ENCODE measurements at regions of chr3 and their contacts with region 1.

Region 1: DNA sequence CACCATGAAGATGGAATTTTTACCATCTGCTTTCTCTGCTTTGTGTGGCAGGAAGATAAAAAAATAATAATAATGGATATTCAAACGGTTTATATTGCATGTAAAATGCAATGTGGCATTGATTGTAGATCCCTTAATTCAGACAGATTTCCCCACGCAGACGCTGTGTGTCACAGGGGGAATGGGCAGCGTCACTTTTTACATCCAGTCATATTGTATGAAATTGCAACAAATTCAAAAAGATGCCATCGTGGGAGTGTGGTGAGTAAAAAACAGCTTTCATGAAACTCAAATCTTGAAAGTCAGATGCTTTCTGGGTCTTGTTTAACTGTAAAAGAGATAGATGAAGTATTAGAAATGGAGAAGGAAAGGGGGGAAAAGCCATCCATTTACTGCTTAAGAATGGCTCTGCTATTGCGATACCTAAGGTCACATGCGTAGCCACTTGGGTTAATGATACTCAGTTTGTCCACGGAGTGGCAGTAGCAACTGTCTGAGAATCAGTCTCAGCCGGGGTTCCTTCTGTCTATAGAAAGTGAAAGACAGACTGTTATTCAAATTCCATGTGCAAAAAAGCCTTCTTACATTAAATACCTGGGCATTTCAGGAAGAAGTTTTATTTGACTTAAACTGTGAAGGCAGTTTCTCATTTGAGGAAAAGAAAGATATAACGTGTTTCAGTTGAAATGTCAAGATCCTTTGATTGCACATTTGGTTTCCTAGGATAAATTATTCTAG is 28.5 kb downstream of the BTD start:
- DNase-seq: peak; percentile 69
- H3K4me3 Mint-ChIP-seq: peak overlapping the region; percentile 48
- H3K27ac Mint-ChIP-seq: peak overlapping the region; percentile 62
- H3K4me1 Mint-ChIP-seq: peaks cover 49% of the 10 kb centered on the region
- H3K27me3 Mint-ChIP-seq: no peaks in the 10 kb centered on the region

Region 2: GRCh38 chr3:15610082-15610759 is 19.8 kb before region 1 on chr3:
- intact Hi-C with region 1: no loop called
- DNase-seq: no peak
- H3K4me3 Mint-ChIP-seq: no peak overlapping the region
- H3K27ac Mint-ChIP-seq: no peak overlapping the region
- H3K4me1 Mint-ChIP-seq: no peaks in the 10 kb centered on the region
- H3K27me3 Mint-ChIP-seq: peaks cover 10% of the 10 kb centered on the region

Region 3: GRCh38 chr3:15647611-15648167 is 17.7 kb after region 1 on chr3:
- intact Hi-C with region 1: loop called (anchors 2 kb)
- DNase-seq: peak; percentile 63
- H3K4me3 Mint-ChIP-seq: peak overlapping the region; percentile 60
- H3K27ac Mint-ChIP-seq: peak overlapping the region; percentile 57
- H3K4me1 Mint-ChIP-seq: peaks cover 52% of the 10 kb centered on the region
- H3K27me3 Mint-ChIP-seq: peaks cover 7% of the 10 kb centered on the region

Region 4: DNA sequence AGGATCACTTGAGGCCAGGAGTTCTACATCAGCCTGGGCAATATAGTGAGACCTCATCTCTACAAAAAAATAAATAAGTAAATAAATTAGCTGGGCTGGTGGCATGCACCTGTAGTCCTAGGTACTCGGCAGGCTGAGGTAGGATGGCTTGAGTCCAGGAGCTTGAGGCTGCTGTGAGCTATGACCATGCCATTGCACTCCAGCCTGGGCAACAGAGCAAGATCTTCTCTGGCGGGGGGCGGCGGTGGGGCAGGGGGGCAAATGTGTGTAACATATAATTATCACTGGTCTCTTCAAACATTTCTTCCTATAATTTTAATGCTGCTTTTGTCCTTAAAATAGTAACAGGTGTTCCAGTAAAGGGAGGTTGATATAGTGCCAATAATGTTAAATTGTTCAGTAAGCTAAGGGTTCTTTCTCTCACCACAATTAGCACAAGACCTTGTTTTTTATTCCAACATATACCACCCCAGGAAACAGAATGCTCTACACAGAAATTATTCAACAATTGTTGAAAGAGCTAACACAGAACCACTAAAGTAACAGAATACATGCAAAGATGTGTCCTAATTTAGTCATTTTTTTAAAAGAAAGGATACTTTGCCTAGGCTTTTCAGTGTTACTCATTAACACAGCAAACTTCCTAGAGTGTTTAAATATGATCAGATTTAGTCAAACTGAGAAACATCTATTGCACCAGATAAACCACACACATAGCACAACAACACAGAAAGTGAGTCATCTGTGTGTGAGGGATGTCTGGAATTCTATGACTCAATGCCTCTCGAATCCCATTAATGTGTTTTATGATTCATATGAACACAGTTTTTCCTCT is 138.6 kb after region 1 on chr3:
- intact Hi-C with region 1: loop called (anchors 1 kb)
- DNase-seq: no peak
- H3K4me3 Mint-ChIP-seq: peak overlapping the region; percentile 12
- H3K27ac Mint-ChIP-seq: peak overlapping the region; percentile 75
- H3K4me1 Mint-ChIP-seq: peaks cover 50% of the 10 kb centered on the region
- H3K27me3 Mint-ChIP-seq: no peaks in the 10 kb centered on the region

Region 5: GRCh38 chr3:15859507-15860013 is 229.5 kb after region 1 on chr3:
- intact Hi-C with region 1: loop called (anchors 1 kb)
- DNase-seq: peak; percentile 78
- H3K4me3 Mint-ChIP-seq: peak overlapping the region; percentile 92
- H3K27ac Mint-ChIP-seq: peak overlapping the region; percentile 91
- H3K4me1 Mint-ChIP-seq: peaks cover 33% of the 10 kb centered on the region
- H3K27me3 Mint-ChIP-seq: peaks cover 3% of the 10 kb centered on the region

Region 6: DNA sequence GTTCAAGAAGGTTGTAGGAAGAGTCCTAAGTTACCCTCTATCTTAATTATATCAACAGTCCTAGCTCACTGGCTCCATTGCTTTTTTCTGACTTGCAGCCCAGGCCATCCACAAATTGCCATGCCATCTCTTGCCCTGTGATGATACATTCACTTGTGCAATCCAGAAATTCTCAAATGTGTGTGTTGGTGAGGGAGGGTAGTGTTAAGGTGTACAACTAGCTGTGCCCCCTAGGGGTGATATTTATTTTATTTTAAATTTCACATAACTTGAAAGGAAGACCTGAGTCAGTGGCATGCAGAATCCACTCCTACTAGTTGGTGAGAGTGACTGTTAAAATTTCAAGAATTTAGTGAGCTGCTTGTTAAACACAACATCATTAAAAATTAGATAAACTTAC is 323.8 kb after region 1 on chr3:
- intact Hi-C with region 1: loop called (anchors 10 kb)
- DNase-seq: no peak
- H3K4me3 Mint-ChIP-seq: no peak overlapping the region
- H3K27ac Mint-ChIP-seq: no peak overlapping the region
- H3K4me1 Mint-ChIP-seq: no peaks in the 10 kb centered on the region
- H3K27me3 Mint-ChIP-seq: no peaks in the 10 kb centered on the region

Region 7: DNA sequence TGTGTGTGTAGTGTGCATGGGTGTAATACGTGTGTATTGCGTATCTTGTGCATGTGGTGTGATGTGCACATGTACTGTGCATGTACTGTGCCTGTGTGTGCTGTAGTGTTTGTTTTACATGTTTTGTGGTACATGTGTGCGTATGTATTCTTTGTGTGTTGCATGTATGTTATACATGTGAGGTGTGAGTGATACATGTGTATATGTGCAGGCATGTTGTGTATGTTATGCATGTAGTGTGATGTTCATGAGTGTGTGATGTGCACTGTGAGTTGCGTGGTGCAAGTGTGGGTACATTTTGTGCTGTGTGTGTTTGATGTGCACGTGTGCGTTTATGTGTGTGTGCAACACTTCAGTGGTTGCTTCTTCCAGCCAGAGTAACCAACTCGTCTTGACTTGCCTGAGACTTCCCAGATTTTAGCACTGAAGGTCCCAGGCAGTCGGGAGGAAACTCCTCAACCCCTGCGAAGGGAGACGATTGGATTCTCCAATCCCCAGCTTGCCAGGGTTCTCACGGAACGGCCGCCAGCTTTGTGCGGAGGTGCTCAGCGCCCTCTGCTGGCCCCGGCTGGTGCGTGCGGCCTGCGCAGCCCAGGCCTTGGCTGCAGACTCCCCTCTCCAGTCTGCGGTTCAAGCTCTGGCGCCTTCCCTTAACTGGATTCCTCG is 548.1 kb after region 1 on chr3:
- intact Hi-C with region 1: loop called (anchors 2 kb)
- DNase-seq: peak; percentile 45
- H3K4me3 Mint-ChIP-seq: no peak overlapping the region
- H3K27ac Mint-ChIP-seq: no peak overlapping the region
- H3K4me1 Mint-ChIP-seq: no peaks in the 10 kb centered on the region
- H3K27me3 Mint-ChIP-seq: peaks cover 2% of the 10 kb centered on the region

Region 8: DNA sequence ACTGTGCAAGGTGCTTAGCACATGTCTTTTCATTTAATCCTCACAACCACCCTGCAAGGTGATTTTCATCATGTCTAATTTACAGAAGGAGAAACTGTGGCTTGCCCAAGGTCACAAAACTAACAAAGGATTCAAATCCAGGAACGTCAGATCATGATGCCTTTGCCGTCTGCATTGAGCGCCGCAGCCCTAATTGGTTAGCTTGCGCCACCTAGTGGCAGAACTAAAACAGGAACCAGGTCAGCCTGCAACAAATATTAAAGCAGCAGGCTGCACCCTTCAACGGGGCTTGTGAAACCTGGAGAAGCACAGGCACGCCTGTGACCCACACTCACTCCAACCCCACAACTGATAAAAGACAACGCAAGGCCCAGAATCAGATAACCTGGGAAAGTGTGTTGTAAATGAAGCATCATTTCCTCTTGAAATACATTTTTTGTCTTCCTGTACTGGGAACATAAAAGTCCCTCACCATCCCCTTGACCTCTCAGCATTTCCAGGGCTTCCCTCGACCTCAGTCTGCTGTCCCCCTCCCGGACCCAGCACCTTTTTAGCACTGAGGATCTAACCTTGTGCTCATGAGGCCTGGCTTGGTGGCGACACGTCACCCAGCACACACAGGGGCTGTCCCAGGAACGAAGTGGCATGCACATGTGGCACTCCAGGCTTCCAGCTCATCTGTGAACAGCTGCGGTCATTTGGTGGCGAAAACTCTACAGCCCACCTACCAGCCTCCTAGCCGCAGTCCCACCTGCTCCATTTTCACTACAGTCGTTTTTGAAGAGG is 617.4 kb after region 1 on chr3:
- intact Hi-C with region 1: loop called (anchors 1 kb)
- DNase-seq: peak; percentile 70
- H3K4me3 Mint-ChIP-seq: no peak overlapping the region
- H3K27ac Mint-ChIP-seq: no peak overlapping the region
- H3K4me1 Mint-ChIP-seq: peaks cover 32% of the 10 kb centered on the region
- H3K27me3 Mint-ChIP-seq: peaks cover 2% of the 10 kb centered on the region